ENCODE measurements at regions of chr6 and their contacts with region 1.

Region 1: DNA sequence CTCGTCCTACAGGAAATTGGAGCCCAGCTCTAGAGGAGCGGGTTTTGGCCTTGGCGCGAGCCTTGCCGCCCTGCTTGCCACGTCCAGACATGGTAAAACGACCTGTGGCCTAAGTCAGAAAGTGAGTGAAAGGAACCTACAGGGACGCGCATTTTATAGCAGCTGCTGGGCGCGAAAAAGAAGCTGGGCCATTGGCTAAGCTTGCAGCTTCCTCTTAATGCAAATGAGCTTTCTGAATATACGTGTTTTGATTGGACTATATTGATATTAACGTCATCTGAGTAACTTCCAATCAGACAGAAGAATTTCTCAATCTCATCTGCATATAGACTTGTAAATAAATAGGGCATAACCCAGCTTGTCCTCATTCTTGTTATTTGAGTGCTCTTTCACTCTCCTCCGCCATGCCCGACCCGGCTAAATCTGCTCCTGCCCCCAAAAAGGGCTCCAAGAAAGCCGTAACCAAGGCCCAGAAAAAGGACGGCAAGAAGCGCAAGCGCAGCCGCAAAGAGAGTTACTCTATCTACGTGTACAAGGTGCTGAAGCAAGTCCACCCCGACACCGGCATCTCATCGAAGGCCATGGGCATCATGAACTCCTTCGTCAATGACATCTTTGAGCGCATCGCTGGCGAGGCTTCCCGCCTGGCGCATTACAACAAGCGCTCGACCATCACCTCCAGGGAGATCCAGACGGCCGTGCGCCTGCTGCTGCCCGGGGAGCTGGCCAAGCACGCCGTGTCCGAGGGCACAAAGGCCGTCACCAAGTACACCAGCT is 18.9 kb downstream of the OR2B2 start:
- DNase-seq: peak; percentile 96
- ATAC-seq: peak; percentile 55
- H3K4me3 Mint-ChIP-seq: no peak overlapping the region
- H3K27ac Mint-ChIP-seq: no peak overlapping the region
- H3K4me1 Mint-ChIP-seq: peaks cover 56% of the 10 kb centered on the region
- H3K27me3 Mint-ChIP-seq: no peaks in the 10 kb centered on the region

Region 2: GRCh38 chr6:26045065-26045927 is 1848.0 kb before region 1 on chr6:
- CTCF ChIA-PET with region 1: no interaction called
- POLR2A ChIA-PET with region 1: interaction called, 14 read pairs
- DNase-seq: peak; percentile 91
- ATAC-seq: peak; percentile 55
- H3K4me3 Mint-ChIP-seq: peak overlapping the region; percentile 88
- H3K27ac Mint-ChIP-seq: peak overlapping the region; percentile 99
- H3K4me1 Mint-ChIP-seq: peaks cover 43% of the 10 kb centered on the region
- H3K27me3 Mint-ChIP-seq: no peaks in the 10 kb centered on the region

Region 3: DNA sequence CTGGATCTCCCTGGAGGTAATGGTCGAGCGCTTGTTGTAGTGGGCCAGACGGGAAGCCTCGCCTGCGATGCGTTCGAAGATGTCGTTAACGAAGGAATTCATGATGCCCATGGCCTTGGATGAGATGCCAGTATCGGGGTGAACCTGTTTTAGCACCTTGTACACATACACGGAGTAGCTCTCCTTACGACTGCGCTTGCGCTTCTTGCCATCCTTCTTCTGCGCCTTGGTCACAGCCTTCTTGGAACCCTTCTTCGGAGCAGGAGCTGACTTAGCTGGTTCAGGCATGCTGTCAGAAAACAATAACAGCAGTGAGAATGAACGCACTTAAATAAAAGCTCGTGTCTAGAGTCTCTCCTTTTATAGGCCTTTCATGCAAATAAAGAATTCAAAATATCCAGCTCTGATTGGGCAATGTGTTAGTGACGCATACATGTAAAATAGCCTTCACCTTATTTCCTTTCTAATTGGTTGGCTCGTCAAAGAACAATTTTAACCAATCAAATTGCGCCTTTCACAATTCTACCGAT is 1676.8 kb before region 1 on chr6:
- CTCF ChIA-PET with region 1: no interaction called
- POLR2A ChIA-PET with region 1: interaction called, 16 read pairs
- DNase-seq: peak; percentile 93
- ATAC-seq: peak; percentile 67
- H3K4me3 Mint-ChIP-seq: no peak overlapping the region
- H3K27ac Mint-ChIP-seq: no peak overlapping the region
- H3K4me1 Mint-ChIP-seq: peaks cover 43% of the 10 kb centered on the region
- H3K27me3 Mint-ChIP-seq: no peaks in the 10 kb centered on the region

Region 4: GRCh38 chr6:27138837-27139755 is 754.2 kb before region 1 on chr6:
- CTCF ChIA-PET with region 1: no interaction called
- POLR2A ChIA-PET with region 1: interaction called, 200 read pairs
- DNase-seq: peak; percentile 87
- ATAC-seq: peak; percentile 68
- H3K4me3 Mint-ChIP-seq: peak overlapping the region; percentile 95
- H3K27ac Mint-ChIP-seq: peak overlapping the region; percentile 98
- H3K4me1 Mint-ChIP-seq: peaks cover 71% of the 10 kb centered on the region
- H3K27me3 Mint-ChIP-seq: no peaks in the 10 kb centered on the region

Region 5: GRCh38 chr6:27772261-27773001 is 120.8 kb before region 1 on chr6:
- CTCF ChIA-PET with region 1: interaction called, 48 read pairs
- POLR2A ChIA-PET with region 1: interaction called, 15 read pairs
- DNase-seq: peak; percentile 93
- ATAC-seq: peak; percentile 100
- H3K4me3 Mint-ChIP-seq: no peak overlapping the region
- H3K27ac Mint-ChIP-seq: peak overlapping the region; percentile 8
- H3K4me1 Mint-ChIP-seq: peaks cover 22% of the 10 kb centered on the region
- H3K27me3 Mint-ChIP-seq: peaks cover 20% of the 10 kb centered on the region

Region 6: DNA sequence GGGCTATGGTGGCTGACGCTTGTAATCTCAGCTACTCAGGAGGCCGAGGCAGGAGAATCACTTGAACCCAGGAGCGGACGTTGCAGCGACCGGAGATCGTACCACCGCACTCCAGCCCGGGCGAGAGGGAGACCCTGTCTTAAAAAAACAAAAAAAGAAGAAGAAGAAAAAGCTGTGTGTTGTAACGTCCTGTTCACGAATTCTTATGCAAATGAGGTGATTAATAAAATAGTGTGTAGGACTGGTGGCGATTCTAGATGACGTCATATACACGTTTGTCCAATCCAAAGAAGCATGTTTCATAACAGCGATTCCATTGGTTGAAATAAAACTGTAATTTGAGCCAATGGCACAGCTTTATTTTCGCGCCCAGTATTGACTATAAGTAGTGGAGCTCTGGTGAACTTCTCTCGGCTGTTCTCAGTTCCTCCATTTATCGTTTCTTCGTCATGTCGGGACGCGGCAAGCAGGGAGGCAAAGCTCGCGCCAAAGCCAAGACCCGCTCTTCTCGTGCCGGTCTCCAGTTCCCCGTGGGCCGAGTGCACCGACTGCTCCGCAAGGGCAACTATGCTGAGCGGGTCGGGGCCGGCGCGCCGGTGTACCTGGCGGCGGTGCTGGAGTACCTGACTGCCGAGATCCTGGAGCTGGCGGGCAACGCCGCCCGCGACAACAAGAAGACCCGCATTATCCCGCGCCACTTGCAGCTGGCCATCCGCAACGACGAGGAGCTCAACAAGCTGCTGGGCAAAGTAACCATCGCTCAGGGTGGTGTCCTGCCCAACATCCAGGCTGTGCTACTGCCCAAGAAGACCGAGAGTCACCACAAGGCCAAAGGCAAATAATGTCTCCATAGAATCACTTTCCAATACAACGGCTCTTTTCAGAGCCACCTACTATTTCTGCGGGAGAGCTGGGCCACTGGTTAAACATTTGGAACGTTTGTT is 28.1 kb before region 1 on chr6:
- CTCF ChIA-PET with region 1: interaction called, 109 read pairs
- POLR2A ChIA-PET with region 1: interaction called, 1,677 read pairs
- DNase-seq: peak; percentile 90
- ATAC-seq: peak; percentile 57
- H3K4me3 Mint-ChIP-seq: peak overlapping the region; percentile 87
- H3K27ac Mint-ChIP-seq: peak overlapping the region; percentile 99
- H3K4me1 Mint-ChIP-seq: peaks cover 55% of the 10 kb centered on the region
- H3K27me3 Mint-ChIP-seq: no peaks in the 10 kb centered on the region

Region 7: GRCh38 chr6:28355743-28356665 is 462.8 kb after region 1 on chr6:
- CTCF ChIA-PET with region 1: interaction called, 20 read pairs
- POLR2A ChIA-PET with region 1: interaction called, 6 read pairs
- DNase-seq: peak; percentile 81
- ATAC-seq: peak; percentile 83
- H3K4me3 Mint-ChIP-seq: peak overlapping the region; percentile 90
- H3K27ac Mint-ChIP-seq: peak overlapping the region; percentile 87
- H3K4me1 Mint-ChIP-seq: peaks cover 34% of the 10 kb centered on the region
- H3K27me3 Mint-ChIP-seq: no peaks in the 10 kb centered on the region